MCF 10A (cell line): ENCODE measurements at regions of chr14 and their contacts with region 1.

Region 1: DNA sequence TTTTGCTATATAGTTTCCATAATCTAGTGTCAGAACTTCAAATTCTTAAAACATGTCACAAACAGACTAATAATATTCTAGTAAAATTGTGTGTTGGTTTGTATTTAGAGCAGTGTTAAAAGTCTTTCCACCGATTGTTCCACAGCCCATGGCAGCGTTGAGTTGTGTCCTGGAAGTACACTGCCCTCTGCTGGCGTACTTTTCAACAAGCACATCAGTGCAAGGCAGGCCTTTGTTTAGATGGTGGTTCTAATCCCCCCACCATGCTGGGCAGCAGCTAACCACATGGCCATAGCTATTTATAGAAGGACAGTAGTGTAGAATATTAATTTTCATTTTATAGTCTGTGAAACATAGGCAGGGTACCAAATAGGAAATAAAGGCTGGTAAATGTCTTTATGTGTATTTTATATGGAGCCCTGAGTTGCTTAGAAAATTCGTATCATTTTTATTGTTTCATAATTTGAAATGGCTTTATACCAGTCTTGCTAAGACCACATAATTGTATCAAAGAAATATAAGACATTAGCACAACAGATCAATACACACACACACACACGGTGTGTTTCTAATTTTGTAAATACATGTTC is 235.4 kb downstream of the SEC23A start:
- DNase-seq: peak; percentile 82
- H3K4me3 Mint-ChIP-seq: no peak overlapping the region
- H3K27ac Mint-ChIP-seq: no peak overlapping the region
- H3K4me1 Mint-ChIP-seq: no peaks in the 10 kb centered on the region
- H3K27me3 Mint-ChIP-seq: no peaks in the 10 kb centered on the region
- CTCF ChIP-seq: peak; percentile 61

Region 2: GRCh38 chr14:37246427-37246914 is 1621.2 kb before region 1 on chr14:
- CTCF ChIA-PET with region 1: no interaction called
- POLR2A ChIA-PET with region 1: no interaction called
- intact Hi-C with region 1: loop called (anchors 5 kb)
- DNase-seq: peak; percentile 64
- H3K4me3 Mint-ChIP-seq: no peak overlapping the region
- H3K27ac Mint-ChIP-seq: no peak overlapping the region
- H3K4me1 Mint-ChIP-seq: no peaks in the 10 kb centered on the region
- H3K27me3 Mint-ChIP-seq: no peaks in the 10 kb centered on the region
- CTCF ChIP-seq: peak; percentile 63

Region 3: GRCh38 chr14:37903343-37904191 is 964.1 kb before region 1 on chr14:
- CTCF ChIA-PET with region 1: interaction called, 148 read pairs
- POLR2A ChIA-PET with region 1: interaction called, 3 read pairs
- intact Hi-C with region 1: loop called (anchors 1 kb)
- DNase-seq: peak; percentile 55
- H3K4me3 Mint-ChIP-seq: no peak overlapping the region
- H3K27ac Mint-ChIP-seq: no peak overlapping the region
- H3K4me1 Mint-ChIP-seq: peaks cover 6% of the 10 kb centered on the region
- H3K27me3 Mint-ChIP-seq: no peaks in the 10 kb centered on the region
- CTCF ChIP-seq: peak; percentile 70

Region 4: GRCh38 chr14:38197001-38197783 is 670.5 kb before region 1 on chr14:
- CTCF ChIA-PET with region 1: interaction called, 14 read pairs
- POLR2A ChIA-PET with region 1: no interaction called
- intact Hi-C with region 1: no loop called
- DNase-seq: peak; percentile 3
- H3K4me3 Mint-ChIP-seq: no peak overlapping the region
- H3K27ac Mint-ChIP-seq: peak overlapping the region; percentile 63
- H3K4me1 Mint-ChIP-seq: peaks cover 29% of the 10 kb centered on the region
- H3K27me3 Mint-ChIP-seq: no peaks in the 10 kb centered on the region
- CTCF ChIP-seq: peak; percentile 52

Region 5: GRCh38 chr14:38721822-38722431 is 145.7 kb before region 1 on chr14:
- CTCF ChIA-PET with region 1: interaction called, 94 read pairs
- POLR2A ChIA-PET with region 1: no interaction called
- intact Hi-C with region 1: loop called (anchors 1 kb)
- DNase-seq: peak; percentile 72
- H3K4me3 Mint-ChIP-seq: no peak overlapping the region
- H3K27ac Mint-ChIP-seq: no peak overlapping the region
- H3K4me1 Mint-ChIP-seq: peaks cover 8% of the 10 kb centered on the region
- H3K27me3 Mint-ChIP-seq: no peaks in the 10 kb centered on the region
- CTCF ChIP-seq: peak; percentile 63

Region 6: DNA sequence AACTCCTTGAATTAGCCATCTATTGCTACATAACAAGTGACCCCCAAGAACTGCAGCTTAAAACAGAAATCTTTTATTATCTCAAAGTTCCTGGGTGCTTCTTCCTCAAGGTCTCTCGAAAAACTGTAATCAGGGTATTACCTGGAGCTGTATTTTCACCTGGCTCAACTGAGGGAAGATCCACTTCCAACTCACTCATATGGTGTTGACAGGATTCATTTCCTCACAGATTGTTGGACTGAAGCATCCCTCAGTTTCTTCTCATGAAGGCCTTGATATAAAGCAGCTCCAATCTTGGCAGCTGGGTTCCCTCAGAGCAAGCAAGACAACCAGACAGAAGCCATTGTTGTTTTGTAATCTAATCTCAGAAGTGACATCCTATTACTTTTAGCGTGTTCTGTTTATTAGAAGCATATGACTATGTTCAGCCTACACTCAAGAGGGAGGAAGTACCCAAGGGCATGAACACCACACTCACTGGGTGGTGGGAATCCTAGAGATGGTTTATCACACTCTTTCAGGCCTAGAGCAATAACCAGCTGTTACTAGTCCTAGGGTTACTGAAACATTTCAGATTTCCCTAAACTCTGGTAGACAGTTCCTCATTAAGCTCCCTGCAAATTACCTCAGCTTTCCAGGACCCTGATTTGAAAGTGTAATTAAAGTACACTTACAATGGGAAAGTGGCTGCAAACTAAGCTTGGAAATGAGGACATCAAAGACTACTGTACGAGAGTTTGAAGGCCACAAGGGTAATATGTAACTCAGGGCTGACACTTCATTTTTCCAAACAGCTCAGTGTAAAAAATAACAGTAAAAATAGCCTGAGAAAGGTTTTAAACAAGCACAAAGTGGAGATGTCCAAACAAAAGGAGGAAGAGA is 13.2 kb after region 1 on chr14:
- CTCF ChIA-PET with region 1: interaction called, 38 read pairs
- POLR2A ChIA-PET with region 1: no interaction called
- intact Hi-C with region 1: no loop called
- DNase-seq: no peak
- H3K4me3 Mint-ChIP-seq: no peak overlapping the region
- H3K27ac Mint-ChIP-seq: no peak overlapping the region
- H3K4me1 Mint-ChIP-seq: no peaks in the 10 kb centered on the region
- H3K27me3 Mint-ChIP-seq: no peaks in the 10 kb centered on the region
- CTCF ChIP-seq: no peak